CD14-positive monocyte (primary cell): ENCODE measurements at regions of chr1 and their contacts with region 1.

Region 1: GRCh38 chr1:59296358-59297256 is at the start of gene FGGY:
- DNase-seq: peak; percentile 98 to 99 (median 99)
- H3K4me3 ChIP-seq: peak within 1 kb of the TSS; percentile 50 to 90 (median 85)
- H3K4me3 Mint-ChIP-seq: peak within 1 kb of the TSS; percentile 79 to 90
- H3K27ac ChIP-seq: peak within 1 kb of the TSS; percentile 95 to 99
- H3K27ac Mint-ChIP-seq: peak within 1 kb of the TSS; percentile 96 to 99 (median 97)
- H3K4me1 ChIP-seq: peaks cover 42 to 48% of the 10 kb centered on the region in 2 donors
- H3K4me1 Mint-ChIP-seq: peaks cover 45% of the 10 kb centered on the region
- H3K27me3 ChIP-seq: no peaks in the 10 kb centered on the region
- H3K27me3 Mint-ChIP-seq: peaks cover 0 to 3% (median 0%) of the 10 kb centered on the region in 3 donors
- CTCF ChIP-seq: no peak
- polyA plus RNA-seq, gene FGGY: 2.3 to 4.3 (median 2.9) TPM

Region 2: GRCh38 chr1:58870296-58870676 is 426.3 kb before region 1 on chr1:
- intact Hi-C with region 1: no loop called
- DNase-seq: no peak
- H3K4me3 ChIP-seq: no peak overlapping the region
- H3K4me3 Mint-ChIP-seq: no peak overlapping the region
- H3K27ac ChIP-seq: no peak overlapping the region
- H3K27ac Mint-ChIP-seq: no peak overlapping the region
- H3K4me1 ChIP-seq: no peaks in the 10 kb centered on the region
- H3K4me1 Mint-ChIP-seq: no peaks in the 10 kb centered on the region
- H3K27me3 ChIP-seq: no peaks in the 10 kb centered on the region
- H3K27me3 Mint-ChIP-seq: peaks cover 0 to 6% (median 2%) of the 10 kb centered on the region in 3 donors
- CTCF ChIP-seq: no peak

Region 3: GRCh38 chr1:59116920-59117542 is 179.6 kb before region 1 on chr1:
- intact Hi-C with region 1: no loop called
- DNase-seq: no peak
- H3K4me3 ChIP-seq: no peak overlapping the region
- H3K4me3 Mint-ChIP-seq: no peak overlapping the region
- H3K27ac ChIP-seq: no peak overlapping the region
- H3K27ac Mint-ChIP-seq: no peak overlapping the region
- H3K4me1 ChIP-seq: no peaks in the 10 kb centered on the region
- H3K4me1 Mint-ChIP-seq: peaks cover 3% of the 10 kb centered on the region
- H3K27me3 ChIP-seq: no peaks in the 10 kb centered on the region
- H3K27me3 Mint-ChIP-seq: peaks cover 1 to 2% (median 1%) of the 10 kb centered on the region in 3 donors
- CTCF ChIP-seq: no peak

Region 4: DNA sequence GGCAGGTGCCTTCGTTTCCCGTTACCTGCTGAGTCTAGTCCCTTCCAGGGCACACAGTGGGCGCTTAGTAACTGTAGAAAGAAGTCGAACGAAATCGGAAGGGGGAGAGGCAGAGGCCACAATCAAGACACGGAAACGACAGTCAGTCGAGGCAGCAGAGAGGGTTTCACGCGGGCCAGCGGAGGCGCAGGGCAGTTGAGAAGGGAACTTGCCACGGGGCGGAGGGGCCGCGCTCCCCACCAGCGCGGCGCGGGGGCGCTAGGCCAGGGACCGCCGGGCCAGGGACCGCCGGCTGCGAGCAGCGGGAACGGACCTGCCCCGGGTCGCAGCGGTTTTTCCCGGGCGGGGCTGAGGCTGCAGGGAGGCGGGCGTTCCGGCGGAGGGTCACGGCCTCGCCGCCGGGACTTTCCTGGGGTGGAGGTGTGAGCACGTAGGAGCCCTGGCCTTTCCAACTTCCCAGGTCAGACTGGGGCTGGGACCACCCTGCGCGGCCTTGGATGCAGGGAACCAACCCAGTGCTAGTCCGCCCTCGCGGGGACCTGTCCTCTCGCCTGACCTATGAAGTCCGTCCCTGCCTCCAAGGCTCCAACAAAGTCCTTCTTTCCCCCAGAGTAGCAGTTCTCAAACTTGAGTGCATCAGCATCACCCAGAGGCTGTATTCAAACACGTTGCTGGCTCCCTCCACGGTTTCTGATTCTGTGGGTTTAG is 149.8 kb before region 1 on chr1:
- intact Hi-C with region 1: loop called in 1 of 2 experiments (anchors 10 kb)
- DNase-seq: peak; percentile 17 to 47 (median 19)
- H3K4me3 ChIP-seq: peak overlapping the region; percentile 28 to 73 (median 31)
- H3K4me3 Mint-ChIP-seq: peak overlapping the region; percentile 81 to 98
- H3K27ac ChIP-seq: no peak overlapping the region
- H3K27ac Mint-ChIP-seq: peak overlapping the region in 5 of 7 donors; percentile 13 to 86 (median 76)
- H3K4me1 ChIP-seq: peaks cover 18 to 29% of the 10 kb centered on the region in 2 donors
- H3K4me1 Mint-ChIP-seq: peaks cover 39% of the 10 kb centered on the region
- H3K27me3 ChIP-seq: peaks cover 2 to 7% of the 10 kb centered on the region in 2 donors
- H3K27me3 Mint-ChIP-seq: peaks cover 13 to 20% (median 19%) of the 10 kb centered on the region in 3 donors
- CTCF ChIP-seq: peak; percentile 34

Region 5: GRCh38 chr1:59625384-59625783 is 328.8 kb after region 1 on chr1:
- intact Hi-C with region 1: no loop called
- DNase-seq: no peak
- H3K4me3 ChIP-seq: no peak overlapping the region
- H3K4me3 Mint-ChIP-seq: no peak overlapping the region
- H3K27ac ChIP-seq: no peak overlapping the region
- H3K27ac Mint-ChIP-seq: no peak overlapping the region
- H3K4me1 ChIP-seq: no peaks in the 10 kb centered on the region
- H3K4me1 Mint-ChIP-seq: no peaks in the 10 kb centered on the region
- H3K27me3 ChIP-seq: no peaks in the 10 kb centered on the region
- H3K27me3 Mint-ChIP-seq: no peaks in the 10 kb centered on the region
- CTCF ChIP-seq: no peak